ENCODE measurements at regions of chr5 and their contacts with region 1.

Region 1: DNA sequence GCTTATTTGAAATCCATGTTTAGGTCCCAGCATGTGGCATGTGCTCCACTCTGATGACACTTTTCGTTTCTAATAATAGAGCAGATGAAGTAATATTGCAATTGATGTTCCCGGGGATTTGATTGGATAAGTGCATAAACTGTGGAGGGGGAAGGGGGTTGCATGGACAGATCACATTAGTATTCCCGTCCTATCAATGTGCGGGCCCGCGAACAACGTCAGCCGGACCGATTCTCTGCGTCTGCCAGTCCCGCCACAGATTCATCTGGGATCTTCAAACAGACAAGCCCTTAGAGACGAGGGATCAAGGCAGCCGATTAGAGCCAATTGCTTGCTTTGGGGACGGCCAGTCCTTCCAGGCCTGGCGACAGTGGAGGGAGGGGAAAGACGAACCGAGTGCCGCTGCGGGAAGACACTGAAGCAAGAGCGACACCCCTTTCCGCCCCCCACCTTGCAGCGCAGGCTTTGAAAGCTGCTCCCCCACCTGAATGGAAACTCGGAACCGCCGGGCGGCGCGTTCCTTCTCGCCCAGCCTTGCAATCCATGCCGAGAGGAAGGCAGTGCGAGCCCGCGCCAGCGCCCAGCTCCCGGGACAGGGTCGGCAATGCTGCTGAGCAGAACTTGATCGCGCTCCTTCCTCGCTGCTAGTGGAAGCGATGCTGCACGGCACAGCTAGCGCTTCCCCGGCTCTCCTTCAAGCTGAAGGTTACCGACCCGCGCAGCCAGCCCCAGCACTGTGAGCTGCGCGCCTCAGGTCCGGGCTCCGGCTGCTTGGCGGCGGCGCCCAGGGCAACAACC is at the start of gene RGS7BP:
- DNase-seq: peak; percentile 56 to 85
- ATAC-seq: peak; percentile 93
- H3K4me3 ChIP-seq: peak within 1 kb of the TSS; percentile 15 to 65
- H3K27ac ChIP-seq: no peak within 1 kb of the TSS
- H3K4me1 ChIP-seq: peaks cover 0 to 3% of the 10 kb centered on the region in 2 donors
- H3K27me3 ChIP-seq: no peaks in the 10 kb centered on the region
- total RNA-seq, gene RGS7BP: 6.8 to 27.3 TPM

Region 2: GRCh38 chr5:64158827-64159226 is 347.1 kb before region 1 on chr5:
- intact Hi-C with region 1: loop called (anchors 10 kb)
- DNase-seq: no peak
- ATAC-seq: no peak
- H3K4me3 ChIP-seq: no peak overlapping the region
- H3K27ac ChIP-seq: no peak overlapping the region
- H3K4me1 ChIP-seq: no peaks in the 10 kb centered on the region
- H3K27me3 ChIP-seq: no peaks in the 10 kb centered on the region

Region 3: GRCh38 chr5:64165500-64166200 is 340.3 kb before region 1 on chr5 and contains the start of gene RNF180:
- intact Hi-C with region 1: loop called in 1 of 2 experiments (anchors 10 kb)
- DNase-seq: peak; percentile 64 to 88
- ATAC-seq: peak; percentile 88
- H3K4me3 ChIP-seq: peak within 1 kb of the TSS; percentile 69 to 78
- H3K27ac ChIP-seq: peak within 1 kb of the TSS; percentile 47 to 86
- H3K4me1 ChIP-seq: peaks cover 0 to 2% of the 10 kb centered on the region in 2 donors
- H3K27me3 ChIP-seq: no peaks in the 10 kb centered on the region
- total RNA-seq, gene RNF180: 29.2 to 44.5 TPM

Region 4: GRCh38 chr5:64229163-64229774 is 276.7 kb before region 1 on chr5:
- intact Hi-C with region 1: loop called in 1 of 2 experiments (anchors 10 kb)
- DNase-seq: no peak
- ATAC-seq: peak; percentile 62
- H3K4me3 ChIP-seq: no peak overlapping the region
- H3K27ac ChIP-seq: no peak overlapping the region
- H3K4me1 ChIP-seq: no peaks in the 10 kb centered on the region
- H3K27me3 ChIP-seq: no peaks in the 10 kb centered on the region

Region 5: DNA sequence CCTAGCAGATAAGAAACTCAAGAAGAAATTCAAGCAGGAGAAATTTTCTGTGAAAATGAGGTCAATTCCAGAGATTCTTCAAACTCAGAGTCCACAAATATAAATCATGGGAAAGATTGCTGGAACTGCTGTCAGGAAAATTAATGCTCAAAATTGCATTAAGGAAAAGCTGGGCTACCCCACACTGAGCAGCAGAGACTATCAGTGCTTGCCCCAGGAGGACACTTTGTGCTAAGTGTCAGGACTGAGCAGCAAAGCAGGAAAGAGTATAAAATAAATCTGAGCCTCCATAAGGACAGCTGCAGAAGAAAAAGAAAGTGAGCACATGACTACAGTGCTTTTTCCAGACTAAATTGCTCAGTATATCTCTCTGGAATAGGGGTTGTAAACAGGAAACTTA is 81.4 kb after region 1 on chr5:
- intact Hi-C with region 1: loop called in 1 of 2 experiments (anchors 2 kb)
- DNase-seq: no peak
- ATAC-seq: peak; percentile 13
- H3K4me3 ChIP-seq: no peak overlapping the region
- H3K27ac ChIP-seq: peak overlapping the region in 1 of 2 donors; percentile 43
- H3K4me1 ChIP-seq: peaks cover 0 to 9% of the 10 kb centered on the region in 2 donors
- H3K27me3 ChIP-seq: no peaks in the 10 kb centered on the region

Region 6: GRCh38 chr5:64595031-64595855 is 89.3 kb after region 1 on chr5:
- intact Hi-C with region 1: loop called in 1 of 2 experiments (anchors 2 kb)
- DNase-seq: no peak
- ATAC-seq: peak; percentile 65
- H3K4me3 ChIP-seq: no peak overlapping the region
- H3K27ac ChIP-seq: peak overlapping the region in 1 of 2 donors; percentile 36
- H3K4me1 ChIP-seq: no peaks in the 10 kb centered on the region
- H3K27me3 ChIP-seq: no peaks in the 10 kb centered on the region

Region 7: GRCh38 chr5:64612344-64612961 is 106.5 kb after region 1 on chr5:
- intact Hi-C with region 1: loop called (anchors 5 kb)
- DNase-seq: no peak
- ATAC-seq: peak; percentile 81
- H3K4me3 ChIP-seq: no peak overlapping the region
- H3K27ac ChIP-seq: no peak overlapping the region
- H3K4me1 ChIP-seq: peaks cover 0 to 2% of the 10 kb centered on the region in 2 donors
- H3K27me3 ChIP-seq: no peaks in the 10 kb centered on the region

Measured in aorta (tissue), 5 donors.